ENCODE measurements at regions of chr13 and their contacts with region 1.

Region 1: DNA sequence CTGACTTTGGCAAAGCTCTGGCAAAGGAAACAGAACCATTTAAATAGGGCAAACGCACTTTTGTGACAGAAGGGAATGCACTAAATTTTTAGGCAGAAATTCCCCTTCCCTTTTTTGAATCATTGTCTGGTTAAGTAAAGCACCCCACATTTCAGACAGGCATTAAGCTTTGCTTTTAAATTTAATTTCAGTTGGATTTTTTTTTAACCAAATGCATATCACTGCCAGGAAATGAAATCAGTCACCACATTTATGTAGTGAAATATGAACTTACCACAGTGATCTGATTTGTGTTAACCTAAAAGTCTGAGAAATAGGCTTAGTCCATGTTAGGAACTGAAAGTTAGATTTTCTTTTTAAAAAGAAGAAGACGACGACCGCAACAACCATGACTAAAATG is 10.8 kb downstream of the GPR183 start:
- DNase-seq: peak in 3 of 14 experiments; percentile 63 to 74 (median 68)
- ATAC-seq: peak; percentile 60
- H3K4me3 ChIP-seq: peak overlapping the region; percentile 28
- H3K4me3 Mint-ChIP-seq: peak overlapping the region; percentile 86
- H3K27ac ChIP-seq: peak overlapping the region; percentile 39 to 78
- H3K27ac Mint-ChIP-seq: peak overlapping the region; percentile 100
- H3K4me1 ChIP-seq: peaks cover 43% of the 10 kb centered on the region
- H3K4me1 Mint-ChIP-seq: peaks cover 93% of the 10 kb centered on the region
- H3K27me3 ChIP-seq: no peaks in the 10 kb centered on the region
- H3K27me3 Mint-ChIP-seq: no peaks in the 10 kb centered on the region
- CTCF ChIP-seq: no peak

Region 2: GRCh38 chr13:99250982-99251825 is 45.2 kb before region 1 on chr13:
- CTCF ChIA-PET with region 1: no interaction called
- POLR2A ChIA-PET with region 1: no interaction called
- intact Hi-C with region 1: no loop called
- DNase-seq: no peak
- ATAC-seq: no peak
- H3K4me3 ChIP-seq: no peak overlapping the region
- H3K4me3 Mint-ChIP-seq: no peak overlapping the region
- H3K27ac ChIP-seq: no peak overlapping the region
- H3K27ac Mint-ChIP-seq: peak overlapping the region; percentile 43
- H3K4me1 ChIP-seq: peaks cover 14% of the 10 kb centered on the region
- H3K4me1 Mint-ChIP-seq: peaks cover 68% of the 10 kb centered on the region
- H3K27me3 ChIP-seq: no peaks in the 10 kb centered on the region
- H3K27me3 Mint-ChIP-seq: no peaks in the 10 kb centered on the region
- CTCF ChIP-seq: no peak

Region 3: GRCh38 chr13:99275093-99275469 is 21.3 kb before region 1 on chr13:
- CTCF ChIA-PET with region 1: interaction called, 44 read pairs
- POLR2A ChIA-PET with region 1: interaction called, 22 read pairs
- intact Hi-C with region 1: loop called (anchors 2 kb)
- DNase-seq: peak in 7 of 14 experiments; percentile 34 to 85 (median 65)
- ATAC-seq: peak; percentile 78
- H3K4me3 ChIP-seq: no peak overlapping the region
- H3K4me3 Mint-ChIP-seq: peak overlapping the region; percentile 49
- H3K27ac ChIP-seq: peak overlapping the region; percentile 16 to 49
- H3K27ac Mint-ChIP-seq: peak overlapping the region; percentile 87
- H3K4me1 ChIP-seq: peaks cover 65% of the 10 kb centered on the region
- H3K4me1 Mint-ChIP-seq: peaks cover 100% of the 10 kb centered on the region
- H3K27me3 ChIP-seq: no peaks in the 10 kb centered on the region
- H3K27me3 Mint-ChIP-seq: no peaks in the 10 kb centered on the region
- CTCF ChIP-seq: no peak

Region 4: DNA sequence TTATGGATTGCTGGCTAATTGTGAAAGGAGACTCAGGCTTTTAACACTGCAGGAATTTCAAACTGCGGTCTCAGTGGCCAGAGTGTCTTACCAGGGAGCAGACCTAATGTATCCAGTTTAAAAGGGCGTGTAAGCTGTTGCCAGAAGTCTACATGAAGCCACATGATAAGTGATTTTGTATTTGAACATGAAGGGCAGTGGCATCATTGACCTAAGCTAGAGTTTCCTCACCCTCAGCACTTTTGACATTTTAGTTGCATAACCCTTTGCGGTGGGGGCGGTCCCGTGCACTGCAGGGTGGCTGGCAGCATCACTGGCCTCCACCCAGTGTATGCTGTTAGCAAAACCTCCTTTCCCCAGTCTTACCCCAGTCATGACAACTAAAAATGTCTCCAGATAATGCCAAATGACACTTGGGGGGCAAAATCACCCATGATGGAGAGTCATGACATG is 14.6 kb before region 1 on chr13:
- CTCF ChIA-PET with region 1: interaction called, 5 read pairs
- POLR2A ChIA-PET with region 1: interaction called, 37 read pairs
- intact Hi-C with region 1: loop called (anchors 2 kb)
- DNase-seq: peak in 13 of 14 experiments; percentile 35 to 88 (median 56)
- ATAC-seq: peak; percentile 71
- H3K4me3 ChIP-seq: no peak overlapping the region
- H3K4me3 Mint-ChIP-seq: peak overlapping the region; percentile 55
- H3K27ac ChIP-seq: peak overlapping the region; percentile 80 to 90
- H3K27ac Mint-ChIP-seq: peak overlapping the region; percentile 100
- H3K4me1 ChIP-seq: peaks cover 71% of the 10 kb centered on the region
- H3K4me1 Mint-ChIP-seq: peaks cover 97% of the 10 kb centered on the region
- H3K27me3 ChIP-seq: no peaks in the 10 kb centered on the region
- H3K27me3 Mint-ChIP-seq: no peaks in the 10 kb centered on the region
- CTCF ChIP-seq: no peak

Region 5: DNA sequence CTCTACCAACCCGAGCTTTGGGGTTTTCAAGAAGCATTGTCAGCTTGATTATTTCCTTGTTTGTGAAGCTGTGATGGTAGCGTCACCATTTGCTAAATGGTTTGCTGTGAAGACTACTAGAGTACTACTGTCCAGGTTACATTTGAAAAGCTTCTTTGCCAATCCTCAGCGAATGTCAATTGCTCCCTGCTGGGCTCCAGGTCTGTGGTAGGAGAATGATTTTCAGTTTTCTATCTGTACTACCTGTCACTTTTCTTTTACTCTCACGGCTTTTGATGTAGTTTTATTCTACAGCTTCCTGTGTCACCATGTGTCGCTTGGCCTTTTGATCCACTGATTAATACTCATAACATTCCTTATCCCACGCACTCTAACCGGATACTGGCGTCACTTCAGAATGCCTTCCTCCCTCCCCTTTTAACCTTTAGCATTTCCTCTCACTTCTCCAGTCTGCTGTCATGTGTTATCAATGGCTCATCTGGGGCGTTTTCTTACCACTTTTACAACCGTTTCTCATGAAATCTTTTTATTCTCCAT is 18.3 kb after region 1 on chr13:
- CTCF ChIA-PET with region 1: interaction called, 3 read pairs
- POLR2A ChIA-PET with region 1: interaction called, 58 read pairs
- intact Hi-C with region 1: loop called in 1 of 2 experiments (anchors 2 kb)
- DNase-seq: peak in 7 of 14 experiments; percentile 26 to 92 (median 73)
- ATAC-seq: peak; percentile 83
- H3K4me3 ChIP-seq: peak overlapping the region; percentile 50
- H3K4me3 Mint-ChIP-seq: peak overlapping the region; percentile 61
- H3K27ac ChIP-seq: peak overlapping the region; percentile 88 to 89
- H3K27ac Mint-ChIP-seq: peak overlapping the region; percentile 89
- H3K4me1 ChIP-seq: peaks cover 72% of the 10 kb centered on the region
- H3K4me1 Mint-ChIP-seq: peaks cover 85% of the 10 kb centered on the region
- H3K27me3 ChIP-seq: no peaks in the 10 kb centered on the region
- H3K27me3 Mint-ChIP-seq: no peaks in the 10 kb centered on the region
- CTCF ChIP-seq: no peak

Region 6: GRCh38 chr13:99895223-99895994 is 599.0 kb after region 1 on chr13:
- CTCF ChIA-PET with region 1: no interaction called
- POLR2A ChIA-PET with region 1: no interaction called
- intact Hi-C with region 1: no loop called
- DNase-seq: peak in 5 of 14 experiments; percentile 3 to 38 (median 23)
- ATAC-seq: no peak
- H3K4me3 ChIP-seq: peak overlapping the region; percentile 58
- H3K4me3 Mint-ChIP-seq: peak overlapping the region; percentile 72
- H3K27ac ChIP-seq: no peak overlapping the region
- H3K27ac Mint-ChIP-seq: no peak overlapping the region
- H3K4me1 ChIP-seq: peaks cover 24% of the 10 kb centered on the region
- H3K4me1 Mint-ChIP-seq: peaks cover 15% of the 10 kb centered on the region
- H3K27me3 ChIP-seq: peaks cover 28 to 50% of the 10 kb centered on the region in 2 experiments
- H3K27me3 Mint-ChIP-seq: peaks cover 56% of the 10 kb centered on the region
- CTCF ChIP-seq: no peak

Measured in CD4-positive, alpha-beta T cell (primary cell).